Naive thymus-derived CD4-positive, alpha-beta T cell (primary cell): ENCODE measurements at regions of chr13 and their contacts with region 1.

Region 1: DNA sequence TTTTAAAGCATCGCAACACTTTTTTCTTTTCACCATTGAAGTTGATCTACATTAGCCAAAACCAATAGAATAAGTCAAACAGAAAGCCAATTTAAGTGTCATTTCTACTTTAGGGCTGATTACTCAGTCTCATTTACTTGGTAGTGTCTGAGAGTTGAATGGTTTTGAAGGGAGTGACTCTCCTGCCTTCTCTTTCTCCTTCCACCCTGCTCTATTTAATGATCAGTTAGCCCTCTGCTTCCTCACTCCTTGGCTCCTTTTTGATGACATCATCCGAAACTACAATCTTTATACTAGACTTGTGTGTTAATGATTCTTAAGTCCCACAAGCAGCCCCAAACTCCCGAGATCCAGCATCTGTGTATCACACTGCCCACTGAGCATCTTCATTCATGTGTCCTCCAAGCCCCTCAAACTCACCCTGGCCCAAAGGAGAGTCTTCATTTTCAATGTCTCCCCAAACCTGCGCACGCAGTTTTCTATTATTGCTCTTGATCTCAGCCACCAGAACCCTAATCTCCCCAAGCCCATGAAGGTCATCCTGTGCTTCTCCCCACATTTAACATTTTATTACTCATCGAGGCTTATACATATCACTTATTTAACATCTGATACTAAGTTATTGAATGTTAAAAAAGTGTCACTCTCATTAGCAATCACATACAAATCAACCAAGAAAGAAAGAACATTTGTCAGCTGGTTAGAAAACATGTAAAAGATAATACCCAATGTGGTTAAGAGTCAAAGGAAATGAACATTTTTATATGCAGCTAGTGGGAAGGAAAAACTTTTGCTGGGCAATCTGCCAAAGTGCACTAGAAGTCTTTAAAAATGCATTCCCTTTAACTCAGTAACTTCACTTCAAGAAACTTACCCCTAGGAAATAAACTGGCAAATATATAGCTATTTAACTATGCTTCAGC is 32.2 kb upstream of the ARGLU1 start:
- DNase-seq: peak in 6 of 9 donors; percentile 7 to 58 (median 35)
- ATAC-seq: no peak
- H3K4me3 ChIP-seq: no peak overlapping the region
- H3K4me3 Mint-ChIP-seq: peak overlapping the region in 7 of 10 donors; percentile 2 to 59 (median 35)
- H3K27ac ChIP-seq: no peak overlapping the region
- H3K27ac Mint-ChIP-seq: peak overlapping the region in 4 of 9 donors; percentile 43 to 74 (median 59)
- H3K4me1 ChIP-seq: peaks cover 0 to 10% of the 10 kb centered on the region in 2 donors
- H3K4me1 Mint-ChIP-seq: peaks cover 0 to 24% (median 10%) of the 10 kb centered on the region in 7 donors
- H3K27me3 ChIP-seq: no peaks in the 10 kb centered on the region
- H3K27me3 Mint-ChIP-seq: peaks cover 0 to 18% (median 5%) of the 10 kb centered on the region in 5 donors

Region 2: DNA sequence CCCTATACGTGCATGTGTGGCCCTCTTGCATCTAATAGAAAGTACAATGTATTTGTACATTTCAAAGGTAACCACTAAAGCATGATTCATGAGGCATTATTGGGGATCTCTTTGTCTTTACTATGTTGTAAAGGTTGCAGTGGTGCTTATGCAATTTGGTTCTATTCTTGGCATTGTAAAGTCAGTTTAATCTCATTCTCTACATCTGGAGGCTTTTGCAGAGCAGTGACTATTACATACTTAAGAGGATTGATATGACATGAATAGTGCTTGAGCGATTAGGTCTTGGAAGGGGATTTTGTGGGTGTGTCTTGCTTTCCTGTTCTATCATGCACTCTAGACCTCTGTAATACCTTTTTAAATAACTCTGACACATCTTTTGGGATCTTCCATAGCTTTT is 674.6 kb before region 1 on chr13:
- CTCF ChIA-PET with region 1: no interaction called
- POLR2A ChIA-PET with region 1: no interaction called
- intact Hi-C with region 1: no loop called
- DNase-seq: no peak
- ATAC-seq: no peak
- H3K4me3 ChIP-seq: no peak overlapping the region
- H3K4me3 Mint-ChIP-seq: no peak overlapping the region
- H3K27ac ChIP-seq: no peak overlapping the region
- H3K27ac Mint-ChIP-seq: no peak overlapping the region
- H3K4me1 ChIP-seq: no peaks in the 10 kb centered on the region
- H3K4me1 Mint-ChIP-seq: no peaks in the 10 kb centered on the region
- H3K27me3 ChIP-seq: no peaks in the 10 kb centered on the region
- H3K27me3 Mint-ChIP-seq: peaks cover 0 to 13% (median 4%) of the 10 kb centered on the region in 5 donors

Region 3: DNA sequence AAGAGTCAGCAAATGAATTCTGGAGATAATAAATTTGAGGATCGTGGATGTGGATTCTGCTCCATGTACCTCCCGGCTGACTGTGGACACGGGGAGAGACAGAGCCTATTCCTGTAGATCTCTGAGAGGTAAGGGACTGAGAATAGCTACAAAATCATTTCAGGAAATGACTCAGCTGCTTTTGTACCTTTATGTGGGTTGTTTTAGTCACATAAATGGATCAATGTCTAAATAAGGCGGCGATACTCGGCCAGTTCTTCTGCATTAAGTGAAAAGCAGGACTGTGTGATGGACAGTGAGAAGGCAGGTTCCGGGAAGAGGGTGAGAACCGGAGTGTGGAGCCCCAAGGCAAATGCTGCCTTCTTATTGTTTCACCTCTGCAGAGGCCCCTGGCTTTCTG is 192.8 kb before region 1 on chr13:
- CTCF ChIA-PET with region 1: no interaction called
- POLR2A ChIA-PET with region 1: no interaction called
- intact Hi-C with region 1: loop called in 1 of 2 experiments (anchors 5 kb)
- DNase-seq: no peak
- ATAC-seq: no peak
- H3K4me3 ChIP-seq: no peak overlapping the region
- H3K4me3 Mint-ChIP-seq: no peak overlapping the region
- H3K27ac ChIP-seq: no peak overlapping the region
- H3K27ac Mint-ChIP-seq: no peak overlapping the region
- H3K4me1 ChIP-seq: no peaks in the 10 kb centered on the region
- H3K4me1 Mint-ChIP-seq: peaks cover 0 to 7% (median 0%) of the 10 kb centered on the region in 7 donors
- H3K27me3 ChIP-seq: no peaks in the 10 kb centered on the region
- H3K27me3 Mint-ChIP-seq: peaks cover 0 to 19% (median 12%) of the 10 kb centered on the region in 5 donors

Region 4: GRCh38 chr13:106587787-106588186 is 12.3 kb before region 1 on chr13:
- CTCF ChIA-PET with region 1: no interaction called
- POLR2A ChIA-PET with region 1: no interaction called
- intact Hi-C with region 1: no loop called
- DNase-seq: no peak
- ATAC-seq: no peak
- H3K4me3 ChIP-seq: no peak overlapping the region
- H3K4me3 Mint-ChIP-seq: no peak overlapping the region
- H3K27ac ChIP-seq: no peak overlapping the region
- H3K27ac Mint-ChIP-seq: no peak overlapping the region
- H3K4me1 ChIP-seq: no peaks in the 10 kb centered on the region
- H3K4me1 Mint-ChIP-seq: no peaks in the 10 kb centered on the region
- H3K27me3 ChIP-seq: no peaks in the 10 kb centered on the region
- H3K27me3 Mint-ChIP-seq: peaks cover 5 to 25% (median 9%) of the 10 kb centered on the region in 5 donors

Region 5: GRCh38 chr13:107185889-107186288 is 585.8 kb after region 1 on chr13:
- CTCF ChIA-PET with region 1: no interaction called
- POLR2A ChIA-PET with region 1: no interaction called
- intact Hi-C with region 1: no loop called
- DNase-seq: no peak
- ATAC-seq: no peak
- H3K4me3 ChIP-seq: no peak overlapping the region
- H3K4me3 Mint-ChIP-seq: no peak overlapping the region
- H3K27ac ChIP-seq: no peak overlapping the region
- H3K27ac Mint-ChIP-seq: no peak overlapping the region
- H3K4me1 ChIP-seq: no peaks in the 10 kb centered on the region
- H3K4me1 Mint-ChIP-seq: no peaks in the 10 kb centered on the region
- H3K27me3 ChIP-seq: no peaks in the 10 kb centered on the region
- H3K27me3 Mint-ChIP-seq: peaks cover 0 to 10% (median 0%) of the 10 kb centered on the region in 5 donors